ENCODE measurements at regions of chr3 and their contacts with region 1.

Region 1: GRCh38 chr3:184261270-184261853 is at the start of gene CAMK2N2:
- DNase-seq: no peak
- H3K4me3 ChIP-seq: peak within 1 kb of the TSS; percentile 59
- H3K27ac ChIP-seq: no peak within 1 kb of the TSS
- H3K27me3 ChIP-seq: peaks cover 31% of the 10 kb centered on the region
- CTCF ChIP-seq: no peak
- polyA plus RNA-seq, gene CAMK2N2: 0.07 and 0.27 TPM in 2 replicates

Region 2: DNA sequence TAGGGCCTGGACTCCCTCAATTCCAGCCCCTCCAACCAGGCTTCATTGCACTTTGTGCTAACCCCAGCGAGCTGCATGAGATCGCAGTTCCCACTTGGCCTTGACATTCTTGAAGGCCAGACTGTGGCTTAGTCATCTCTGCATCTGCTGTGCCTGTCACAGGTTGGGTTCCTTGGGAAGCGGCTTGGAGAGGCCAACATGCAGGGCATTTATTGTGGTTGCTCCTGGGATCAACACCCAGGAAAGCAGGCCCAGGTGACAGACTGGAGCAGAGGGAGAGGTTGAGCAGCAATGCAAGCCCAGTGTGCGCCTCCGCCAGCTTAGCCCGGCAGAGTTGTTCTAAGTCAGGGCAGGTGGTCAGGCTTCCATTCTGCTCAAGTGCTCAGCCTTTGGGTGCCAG is 64.8 kb before region 1 on chr3:
- CTCF ChIA-PET with region 1: no interaction called
- POLR2A ChIA-PET with region 1: no interaction called
- DNase-seq: no peak
- H3K4me3 ChIP-seq: no peak overlapping the region
- H3K27ac ChIP-seq: no peak overlapping the region
- H3K27me3 ChIP-seq: no peaks in the 10 kb centered on the region
- CTCF ChIP-seq: no peak

Region 3: GRCh38 chr3:184250167-184250828 is 11.1 kb before region 1 on chr3:
- CTCF ChIA-PET with region 1: interaction called, 19 read pairs
- POLR2A ChIA-PET with region 1: no interaction called
- DNase-seq: peak; percentile 61
- H3K4me3 ChIP-seq: peak overlapping the region; percentile 88
- H3K27ac ChIP-seq: peak overlapping the region; percentile 68
- H3K27me3 ChIP-seq: no peaks in the 10 kb centered on the region
- CTCF ChIP-seq: peak; percentile 97

Region 4: GRCh38 chr3:184289426-184289938 is 28.1 kb after region 1 on chr3:
- CTCF ChIA-PET with region 1: interaction called, 12 read pairs
- POLR2A ChIA-PET with region 1: no interaction called
- DNase-seq: no peak
- H3K4me3 ChIP-seq: no peak overlapping the region
- H3K27ac ChIP-seq: no peak overlapping the region
- H3K27me3 ChIP-seq: peaks cover 12% of the 10 kb centered on the region
- CTCF ChIP-seq: peak; percentile 71

Region 5: GRCh38 chr3:185439745-185440466 is 1178.5 kb after region 1 on chr3:
- CTCF ChIA-PET with region 1: no interaction called
- POLR2A ChIA-PET with region 1: no interaction called
- DNase-seq: no peak
- H3K4me3 ChIP-seq: no peak overlapping the region
- H3K27ac ChIP-seq: no peak overlapping the region
- H3K27me3 ChIP-seq: no peaks in the 10 kb centered on the region
- CTCF ChIP-seq: no peak

Measured in AG04450 (cell line).